ENCODE measurements at regions of chr5 and their contacts with region 1.

Region 1: DNA sequence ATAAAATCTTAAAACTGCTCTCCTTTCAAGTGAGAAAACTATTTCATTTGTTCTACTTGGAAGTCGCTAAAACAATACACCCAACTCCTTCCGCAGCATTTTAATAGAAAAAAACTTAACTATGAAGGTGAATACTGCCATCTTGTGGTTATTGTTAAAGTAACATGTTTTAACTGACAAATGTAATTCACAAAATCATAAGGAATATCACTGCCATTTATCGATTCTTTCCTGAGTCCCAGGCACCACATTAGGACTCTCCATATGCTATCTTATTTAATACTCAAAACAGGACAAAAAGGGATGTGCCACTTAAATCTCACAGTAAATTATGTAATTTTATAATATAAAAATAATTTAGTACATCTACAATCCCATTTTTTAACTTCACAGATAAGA is 130.5 kb upstream of the ITGA1 start:
- DNase-seq: peak; percentile 17
- CTCF ChIP-seq: peak; percentile 44

Region 2: GRCh38 chr5:50962934-50963872 is 1694.0 kb before region 1 on chr5:
- CTCF ChIA-PET with region 1: interaction called, 23 read pairs
- POLR2A ChIA-PET with region 1: no interaction called
- DNase-seq: peak; percentile 85
- CTCF ChIP-seq: peak; percentile 98

Region 3: GRCh38 chr5:52638732-52639131 is 18.5 kb before region 1 on chr5:
- CTCF ChIA-PET with region 1: interaction called, 21 read pairs
- POLR2A ChIA-PET with region 1: no interaction called
- DNase-seq: no peak
- CTCF ChIP-seq: no peak

Region 4: GRCh38 chr5:52682492-52682891 is 25.2 kb after region 1 on chr5:
- CTCF ChIA-PET with region 1: no interaction called
- POLR2A ChIA-PET with region 1: no interaction called
- DNase-seq: no peak
- CTCF ChIP-seq: no peak

Measured in GM10248 (cell line).